ENCODE measurements at regions of chr12 and their contacts with region 1.

Region 1: DNA sequence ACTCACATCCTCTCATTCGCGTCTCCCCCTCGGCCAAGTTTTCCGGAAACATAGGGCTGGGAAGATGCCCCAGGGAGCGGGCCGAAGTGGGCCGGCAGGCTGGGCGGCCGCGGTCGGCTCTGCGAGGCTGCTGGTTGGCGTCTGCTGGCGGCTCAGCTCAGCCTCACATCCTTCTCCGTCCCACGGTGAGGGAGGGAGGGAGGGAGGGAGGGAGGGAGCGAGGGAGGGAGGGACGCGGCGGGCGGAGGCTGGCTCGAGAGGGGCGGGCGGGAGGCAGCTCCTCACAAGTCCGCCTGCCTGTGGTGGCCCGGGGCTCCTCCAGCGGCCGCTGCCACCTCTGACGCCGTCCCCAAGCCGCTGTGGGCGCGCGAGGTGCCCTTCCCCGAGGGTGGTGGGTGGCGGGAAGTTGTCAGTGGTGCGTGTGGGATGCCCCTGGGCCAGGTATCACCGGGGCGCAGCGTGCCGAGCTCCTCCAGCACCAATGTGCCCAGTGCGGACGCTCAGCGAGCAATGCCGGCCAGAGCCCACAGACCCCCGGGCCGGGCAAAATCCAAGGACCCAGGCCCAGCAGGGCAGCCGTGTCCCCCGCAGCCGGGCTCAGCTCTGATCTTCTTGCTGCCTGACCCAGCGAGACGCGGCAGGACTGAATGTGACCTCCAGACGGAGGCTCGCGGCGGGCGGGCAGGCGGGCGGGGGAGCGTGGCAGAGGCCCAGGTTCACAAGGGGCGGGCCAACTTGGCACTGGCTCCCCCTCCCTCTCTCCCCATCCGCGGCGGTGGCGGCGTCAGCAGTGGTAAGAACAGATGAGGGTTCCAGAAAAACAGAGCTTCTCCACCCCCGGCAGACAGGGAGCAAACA is 94.0 kb downstream of the RFLNA start:
- DNase-seq: peak; percentile 93
- ATAC-seq: peak; percentile 71

Region 2: GRCh38 chr12:124422570-124423523 is 33.9 kb after region 1 on chr12:
- intact Hi-C with region 1: loop called (anchors 5 kb)
- DNase-seq: peak; percentile 96
- ATAC-seq: peak; percentile 82

Region 3: GRCh38 chr12:124493809-124494750 is 105.2 kb after region 1 on chr12:
- intact Hi-C with region 1: no loop called
- DNase-seq: no peak
- ATAC-seq: no peak

Region 4: DNA sequence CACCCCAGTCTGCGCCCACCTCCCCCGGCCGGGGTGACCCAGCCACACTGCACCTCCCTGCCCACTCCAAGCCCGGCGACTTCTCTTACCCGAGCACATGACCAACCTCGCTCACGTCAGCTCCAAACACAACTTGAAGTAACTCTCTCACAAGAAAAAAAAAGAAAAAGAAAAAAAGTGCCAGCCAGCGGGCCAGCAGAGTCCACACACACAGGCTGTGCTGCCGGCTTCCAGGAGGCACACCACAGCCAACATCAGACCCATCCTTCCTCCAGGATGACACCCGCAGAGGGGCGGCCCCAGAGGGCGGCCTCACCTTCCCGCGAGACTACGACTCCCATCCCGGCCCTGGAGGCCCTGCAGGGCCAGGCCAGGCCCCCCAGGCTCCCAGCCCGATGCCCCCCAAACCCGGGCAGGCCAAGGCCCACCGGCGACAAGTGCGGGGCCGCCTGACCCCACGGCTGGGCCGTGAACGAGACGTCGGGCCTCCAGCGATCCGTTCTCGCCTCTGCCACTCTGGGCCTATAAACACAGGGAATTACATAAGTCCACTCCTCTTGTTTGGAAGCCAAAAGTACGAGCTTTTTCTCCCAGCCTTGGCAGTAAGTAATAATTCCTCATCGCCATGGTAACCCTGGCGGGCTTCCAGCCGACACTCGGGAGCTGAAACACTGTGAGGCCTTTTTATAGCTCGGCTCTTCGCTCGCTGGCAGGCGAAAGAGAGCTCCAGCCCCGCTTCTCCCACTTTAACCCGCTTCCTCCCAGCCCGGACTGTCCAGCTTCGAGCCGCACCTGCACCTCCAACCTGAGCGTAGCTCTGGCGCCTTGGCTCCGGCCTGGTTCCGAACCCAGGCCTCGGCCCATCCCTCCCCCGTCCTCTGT is 129.4 kb after region 1 on chr12:
- intact Hi-C with region 1: loop called (anchors 10 kb)
- DNase-seq: peak; percentile 99
- ATAC-seq: peak; percentile 78

Region 5: DNA sequence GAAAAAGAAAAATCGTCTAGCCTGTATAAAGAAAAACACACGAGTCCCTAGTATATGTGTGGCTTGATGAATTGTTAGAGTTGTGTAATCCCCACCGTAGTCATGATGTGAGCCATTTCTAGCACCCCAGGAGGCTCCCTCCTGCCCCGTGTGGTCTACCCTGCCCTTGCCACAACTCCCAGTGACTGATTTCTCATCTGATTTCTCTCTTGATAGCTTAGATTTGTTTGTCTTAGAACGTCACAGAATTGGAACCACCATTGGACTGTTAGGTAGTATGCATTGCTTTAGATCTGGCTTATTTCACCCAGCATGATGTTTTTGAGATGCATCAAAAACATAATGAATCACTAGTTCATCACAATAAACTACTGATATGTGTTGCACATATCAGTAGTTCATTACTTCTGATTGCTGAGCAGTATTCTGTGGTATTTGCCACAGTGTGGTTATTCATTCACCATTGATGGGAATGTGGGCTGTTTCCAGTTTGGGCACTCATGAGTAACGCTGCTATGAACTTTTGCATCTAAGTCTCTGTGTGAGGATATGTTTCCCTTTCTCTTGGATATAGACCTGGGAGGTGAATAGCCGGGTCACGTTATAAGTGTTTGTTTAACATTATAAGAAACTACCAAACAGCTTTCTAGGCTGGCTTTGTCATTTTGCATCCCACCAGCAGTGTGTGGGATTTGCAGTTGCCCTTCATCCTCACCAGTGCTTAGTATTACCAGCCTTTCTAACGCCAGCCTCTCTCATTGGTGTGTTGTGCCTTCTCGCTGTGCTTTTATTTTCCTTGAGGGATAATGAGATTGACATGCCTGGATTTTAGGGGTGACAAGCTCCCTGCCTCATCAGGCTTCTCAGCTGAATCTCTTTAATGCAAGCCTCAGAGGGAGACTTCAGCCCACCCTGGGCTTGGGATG is 210.4 kb after region 1 on chr12:
- intact Hi-C with region 1: no loop called
- DNase-seq: no peak
- ATAC-seq: no peak

Measured in Right ventricle myocardium superior (tissue), 1 donor.